ENCODE measurements at regions of chr18 and their contacts with region 1.

Region 1: DNA sequence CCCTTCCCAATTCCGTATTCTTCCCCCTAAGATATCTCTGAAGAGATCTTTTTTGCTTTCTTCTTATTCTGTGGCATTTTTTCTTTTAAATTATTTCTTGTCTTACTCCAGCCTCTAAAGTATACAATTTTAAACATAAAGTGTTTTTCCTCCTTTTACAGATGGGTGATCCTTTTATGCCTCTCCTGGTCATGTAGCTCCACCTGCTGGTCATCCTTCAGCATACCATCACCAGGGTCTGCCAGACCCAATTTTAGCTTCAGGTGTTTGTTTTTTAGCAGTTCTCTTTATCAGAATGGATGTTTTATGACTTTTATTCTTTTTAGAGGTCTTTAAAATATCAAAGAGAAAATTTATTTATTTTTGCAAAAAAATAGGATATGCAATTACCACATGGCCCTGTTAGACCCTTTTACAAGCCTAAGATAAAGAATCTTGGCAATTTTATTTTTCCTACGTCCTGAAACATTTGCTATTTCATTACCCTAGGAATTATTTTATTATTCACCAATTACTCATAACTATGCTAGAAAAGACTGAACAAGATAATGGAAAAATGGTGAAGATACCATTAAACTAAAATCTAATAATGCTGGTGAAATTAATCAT is 55.5 kb downstream of the PIGN start:
- DNase-seq: peak; percentile 36 to 46
- ATAC-seq: peak; percentile 72

Region 2: DNA sequence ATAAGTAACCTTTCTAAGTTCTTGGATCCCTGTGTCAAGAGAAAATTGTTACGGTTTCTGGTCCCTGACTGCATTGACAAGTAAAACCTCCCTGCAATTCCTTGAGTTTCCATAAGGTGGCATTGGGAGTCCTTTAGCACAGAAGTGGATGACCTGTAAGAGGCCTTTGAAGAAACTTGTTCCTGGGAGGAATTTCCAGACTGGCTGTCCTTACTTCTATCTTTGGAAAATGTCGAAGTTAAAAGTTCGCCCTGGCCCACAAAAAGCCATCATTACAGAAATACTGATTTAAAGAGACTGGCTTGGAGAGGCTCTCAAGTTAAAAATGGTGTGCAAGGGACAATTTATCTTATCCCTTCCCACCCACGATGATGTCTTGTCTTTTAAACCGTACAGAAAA is 579.8 kb before region 1 on chr18:
- intact Hi-C with region 1: loop called in 1 of 2 experiments (anchors 5 kb)
- DNase-seq: no peak
- ATAC-seq: peak; percentile 86

Region 3: GRCh38 chr18:61581578-61582201 is 549.7 kb before region 1 on chr18:
- intact Hi-C with region 1: loop called in 1 of 2 experiments (anchors 5 kb)
- DNase-seq: peak; percentile 64 to 84
- ATAC-seq: peak; percentile 93

Region 4: GRCh38 chr18:61901323-61901986 is 229.9 kb before region 1 on chr18:
- intact Hi-C with region 1: loop called in 1 of 2 experiments (anchors 5 kb)
- DNase-seq: peak; percentile 29 to 35
- ATAC-seq: peak; percentile 71

Measured in left colon (tissue), 2 donors.